Vagina (tissue), 2 donors: ENCODE measurements at regions of chr4 and their contacts with region 1.

Region 1: GRCh38 chr4:156654410-156654809 is 317.2 kb downstream of the PDGFC start:
- DNase-seq: no peak
- H3K4me3 ChIP-seq: no peak overlapping the region
- H3K27ac ChIP-seq: no peak overlapping the region
- H3K4me1 ChIP-seq: no peaks in the 10 kb centered on the region
- H3K27me3 ChIP-seq: no peaks in the 10 kb centered on the region
- CTCF ChIP-seq: no peak
- POLR2A ChIP-seq: no peak

Region 2: DNA sequence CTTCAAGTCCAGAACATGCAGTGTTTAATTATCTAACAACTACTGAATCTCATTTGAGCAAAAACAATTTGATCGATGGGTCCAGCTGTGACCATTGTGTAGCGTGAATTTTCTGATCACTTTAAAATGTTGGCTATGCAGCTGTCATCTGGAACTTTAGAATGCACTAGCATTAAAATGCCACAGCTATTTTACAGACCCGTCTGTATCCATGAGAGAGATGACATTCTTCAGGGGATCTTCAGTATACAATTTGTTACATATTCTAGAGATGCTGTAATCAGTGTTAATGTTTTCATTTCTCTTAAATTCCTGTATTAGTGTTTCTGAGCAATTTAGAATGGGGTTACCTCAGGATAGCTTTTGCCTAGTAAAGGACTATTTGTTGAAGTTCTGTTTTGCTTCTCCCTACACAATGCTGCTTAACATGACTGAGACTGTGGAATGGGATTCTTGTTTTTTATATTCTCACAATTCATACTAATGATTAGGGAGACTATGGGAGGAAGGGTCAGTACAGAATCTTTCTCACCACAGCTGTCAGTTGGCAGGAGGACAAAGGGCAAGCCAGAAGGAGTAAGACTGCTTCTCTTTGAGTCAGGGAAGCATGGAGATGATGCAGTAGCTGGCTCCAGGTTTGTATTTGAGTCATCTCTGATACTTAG is 687.5 kb before region 1 on chr4:
- intact Hi-C with region 1: loop called (anchors 5 kb)
- DNase-seq: no peak
- H3K4me3 ChIP-seq: no peak overlapping the region
- H3K27ac ChIP-seq: no peak overlapping the region
- H3K4me1 ChIP-seq: no peaks in the 10 kb centered on the region
- H3K27me3 ChIP-seq: no peaks in the 10 kb centered on the region
- CTCF ChIP-seq: no peak
- POLR2A ChIP-seq: no peak

Region 3: DNA sequence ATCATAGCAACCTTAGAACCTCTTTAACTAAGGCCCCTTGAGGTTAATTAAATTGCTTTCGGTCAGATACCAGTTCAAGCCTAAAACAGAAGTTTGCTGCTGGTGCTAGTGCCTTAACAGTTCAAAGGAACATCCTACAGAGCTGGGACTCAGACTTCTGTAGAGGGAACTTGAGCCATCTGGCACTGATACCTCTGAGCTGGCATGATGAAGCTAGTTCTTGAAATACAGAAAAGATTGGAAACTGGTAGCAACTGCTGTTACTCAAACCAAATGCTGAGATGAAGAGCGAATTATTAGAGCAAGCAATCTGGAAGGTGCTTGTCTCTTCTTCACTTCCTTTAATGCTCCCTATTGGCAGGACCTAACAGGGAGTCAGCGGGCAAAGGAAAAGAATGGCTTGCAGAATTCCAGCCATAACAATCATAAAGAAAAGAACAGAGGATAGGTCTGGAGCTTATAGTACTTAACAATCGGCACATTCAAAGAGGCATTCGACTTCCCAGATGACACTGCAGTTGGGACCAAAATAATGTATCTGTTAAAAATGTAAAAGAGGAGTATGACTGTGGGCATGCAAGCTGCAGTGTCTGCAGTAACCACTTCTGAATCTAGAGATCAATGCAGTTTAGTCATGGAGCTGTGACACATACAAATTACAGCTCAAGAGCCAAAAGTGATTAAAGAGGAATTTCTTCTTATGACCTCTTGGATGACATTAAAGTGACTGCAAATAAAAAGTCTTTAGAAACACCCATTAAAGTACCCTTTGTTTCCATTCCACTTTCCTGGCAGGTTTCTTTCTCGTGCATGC is 18.3 kb after region 1 on chr4:
- intact Hi-C with region 1: no loop called
- DNase-seq: no peak
- H3K4me3 ChIP-seq: peak overlapping the region in 1 of 2 donors; percentile 1
- H3K27ac ChIP-seq: no peak overlapping the region
- H3K4me1 ChIP-seq: no peaks in the 10 kb centered on the region
- H3K27me3 ChIP-seq: no peaks in the 10 kb centered on the region
- CTCF ChIP-seq: no peak
- POLR2A ChIP-seq: no peak